ENCODE measurements at regions of chr1 and their contacts with region 1.

Region 1: DNA sequence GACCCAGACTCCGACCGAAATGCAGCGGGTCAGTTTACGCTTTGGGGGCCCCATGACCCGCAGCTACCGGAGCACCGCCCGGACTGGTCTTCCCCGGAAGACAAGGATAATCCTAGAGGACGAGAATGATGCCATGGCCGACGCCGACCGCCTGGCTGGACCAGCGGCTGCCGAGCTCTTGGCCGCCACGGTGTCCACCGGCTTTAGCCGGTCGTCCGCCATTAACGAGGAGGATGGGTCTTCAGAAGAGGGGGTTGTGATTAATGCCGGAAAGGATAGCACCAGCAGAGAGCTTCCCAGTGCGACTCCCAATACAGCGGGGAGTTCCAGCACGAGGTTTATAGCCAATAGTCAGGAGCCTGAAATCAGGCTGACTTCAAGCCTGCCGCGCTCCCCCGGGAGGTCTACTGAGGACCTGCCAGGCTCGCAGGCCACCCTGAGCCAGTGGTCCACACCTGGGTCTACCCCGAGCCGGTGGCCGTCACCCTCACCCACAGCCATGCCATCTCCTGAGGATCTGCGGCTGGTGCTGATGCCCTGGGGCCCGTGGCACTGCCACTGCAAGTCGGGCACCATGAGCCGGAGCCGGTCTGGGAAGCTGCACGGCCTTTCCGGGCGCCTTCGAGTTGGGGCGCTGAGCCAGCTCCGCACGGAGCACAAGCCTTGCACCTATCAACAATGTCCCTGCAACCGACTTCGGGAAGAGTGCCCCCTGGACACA is 534 bp downstream of the C1orf56 start:
- DNase-seq: peak; percentile 74
- ATAC-seq: peak; percentile 70
- H3K4me3 ChIP-seq: peak overlapping the region; percentile 77
- H3K27ac ChIP-seq: peak overlapping the region; percentile 12
- H3K4me1 ChIP-seq: peaks cover 12% of the 10 kb centered on the region
- H3K27me3 ChIP-seq: no peaks in the 10 kb centered on the region
- CTCF ChIP-seq: peak; percentile 74

Region 2: DNA sequence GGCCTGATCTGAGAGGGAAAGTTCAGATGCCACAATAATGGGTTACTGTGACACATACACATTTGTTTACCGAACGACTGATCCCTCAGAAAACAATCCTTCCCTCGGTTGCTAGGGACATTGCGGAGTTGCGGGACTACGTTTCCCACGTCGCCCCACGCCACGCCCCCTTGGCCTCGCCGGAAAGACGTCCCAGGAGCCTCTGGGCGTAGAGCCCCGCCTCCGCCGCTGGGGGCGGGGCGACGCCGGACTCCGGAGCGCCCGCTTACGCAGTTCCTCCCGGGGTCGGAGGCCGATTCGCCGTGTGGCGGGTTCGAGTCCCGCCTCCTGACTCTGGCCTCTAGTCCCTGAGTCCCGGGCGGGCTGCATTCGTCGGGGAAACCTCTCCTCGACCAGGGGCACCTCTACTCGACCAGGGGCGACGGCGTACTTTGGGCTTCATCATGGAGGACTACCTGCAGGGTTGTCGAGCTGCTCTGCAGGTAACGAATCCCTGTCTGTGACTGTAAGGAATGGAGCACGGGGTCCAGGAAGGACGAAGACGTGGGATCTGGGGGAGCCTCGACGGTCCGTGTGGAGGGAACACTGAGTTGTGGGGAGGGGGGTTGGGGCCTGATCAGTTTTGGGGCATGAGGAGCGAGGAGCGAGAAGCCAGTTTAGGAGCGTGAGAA is 39.8 kb before region 1 on chr1 and contains the start of gene PRUNE1:
- CTCF ChIA-PET with region 1: no interaction called
- POLR2A ChIA-PET with region 1: no interaction called
- intact Hi-C with region 1: loop called (anchors 5 kb)
- DNase-seq: peak; percentile 100
- ATAC-seq: peak; percentile 83
- H3K4me3 ChIP-seq: peak within 1 kb of the TSS; percentile 86
- H3K27ac ChIP-seq: peak within 1 kb of the TSS; percentile 82
- H3K4me1 ChIP-seq: peaks cover 37% of the 10 kb centered on the region
- H3K27me3 ChIP-seq: no peaks in the 10 kb centered on the region
- CTCF ChIP-seq: no peak
- total RNA-seq, gene PRUNE1: 19.4 and 20.3 TPM in 2 replicates

Region 3: DNA sequence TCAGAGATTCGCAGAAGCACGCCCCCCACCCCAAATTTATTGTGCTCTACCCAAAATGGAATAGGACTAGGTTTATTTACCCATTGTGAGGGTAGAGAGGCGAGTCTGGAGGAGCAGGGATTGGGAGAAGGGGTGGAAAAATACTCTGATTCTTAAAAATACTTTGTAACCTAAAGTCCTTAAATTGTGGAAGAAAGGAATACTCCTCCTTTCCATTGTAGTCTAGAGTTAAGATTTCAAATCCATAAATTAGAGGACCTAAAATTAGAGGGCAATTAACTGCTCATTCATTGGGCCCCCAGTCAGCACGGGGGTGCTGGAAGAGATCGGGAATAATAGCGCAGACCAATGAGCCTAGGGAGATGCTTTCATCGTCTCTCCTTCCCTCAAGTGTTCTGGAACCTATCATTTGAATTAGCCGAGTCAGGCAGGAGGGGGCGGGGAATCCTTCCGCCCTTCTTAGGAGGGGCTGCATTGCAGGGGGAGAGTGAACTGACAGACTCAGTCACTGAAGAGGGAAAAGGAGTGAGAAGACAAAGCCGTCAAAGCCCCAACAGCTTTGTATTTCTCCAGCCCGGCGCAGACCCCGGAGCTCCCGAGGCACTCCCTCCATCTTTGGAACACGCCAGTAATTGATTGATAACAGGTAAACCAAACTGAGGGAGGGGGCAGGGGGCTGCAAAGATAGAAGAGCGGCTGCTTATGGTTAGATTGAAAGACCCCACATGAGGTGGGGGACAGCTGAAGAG is 12.0 kb after region 1 on chr1 and contains the start of gene MLLT11:
- CTCF ChIA-PET with region 1: interaction called, 4 read pairs
- POLR2A ChIA-PET with region 1: no interaction called
- intact Hi-C with region 1: loop called (anchors 1 kb)
- DNase-seq: peak; percentile 66
- ATAC-seq: peak; percentile 53
- H3K4me3 ChIP-seq: peak within 1 kb of the TSS; percentile 99
- H3K27ac ChIP-seq: peak within 1 kb of the TSS; percentile 77
- H3K4me1 ChIP-seq: peaks cover 40% of the 10 kb centered on the region
- H3K27me3 ChIP-seq: no peaks in the 10 kb centered on the region
- CTCF ChIP-seq: peak; percentile 30; the same call in 1 of the 2 replicates
- total RNA-seq, gene MLLT11: 12.3 and 14.1 TPM in 2 replicates